Colonic mucosa (tissue), 4 donors: ENCODE measurements at regions of chr16 and their contacts with region 1.

Region 1: GRCh38 chr16:72467157-72467759 is 295.3 kb upstream of the PMFBP1 start:
- DNase-seq: no peak
- H3K4me3 ChIP-seq: no peak overlapping the region
- H3K27ac ChIP-seq: no peak overlapping the region
- H3K4me1 ChIP-seq: no peaks in the 10 kb centered on the region
- H3K27me3 ChIP-seq: no peaks in the 10 kb centered on the region
- CTCF ChIP-seq: peak; percentile 26

Region 2: DNA sequence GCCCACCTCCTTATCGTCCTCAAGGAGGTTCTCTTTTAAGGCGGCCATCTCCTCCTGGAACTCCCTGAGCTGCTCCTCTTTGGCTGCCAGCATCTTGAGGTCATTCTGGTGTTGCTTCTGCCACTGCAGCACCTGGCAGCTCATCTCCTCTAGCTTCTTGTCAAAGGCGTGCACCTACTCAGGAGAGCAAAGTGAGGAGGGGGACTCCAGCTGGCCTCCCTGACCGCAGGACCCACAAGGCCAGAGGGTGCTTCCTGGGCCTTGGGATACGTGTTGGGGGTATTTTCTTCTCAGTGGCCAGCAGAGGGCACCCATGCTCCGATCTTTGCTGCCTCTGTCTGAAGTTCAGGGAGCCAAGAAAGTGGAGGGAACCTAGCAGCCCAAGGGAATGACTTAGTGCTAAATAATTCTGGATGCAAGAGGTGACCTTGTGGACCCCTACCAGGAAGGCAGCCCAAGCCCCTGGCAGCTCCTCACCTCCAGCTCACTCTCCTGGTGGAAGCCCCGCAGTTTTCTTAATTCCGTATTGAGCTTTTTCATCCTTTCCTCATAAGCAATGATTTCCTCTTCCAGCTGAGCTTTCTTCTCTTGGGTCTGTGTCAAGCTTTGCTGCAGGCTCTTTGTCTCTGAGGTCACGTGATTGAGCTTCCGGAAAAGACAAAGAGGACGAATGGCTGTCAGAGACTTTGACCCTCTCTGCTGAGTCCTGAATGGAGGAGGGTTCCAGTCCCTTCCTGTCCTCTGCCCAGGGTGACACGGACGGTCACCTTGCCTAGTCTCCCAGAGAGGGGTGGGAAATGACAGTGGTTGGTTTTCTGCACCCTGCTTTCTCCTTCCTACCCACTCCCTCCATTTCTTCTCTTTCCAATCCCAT is 342.3 kb before region 1 on chr16:
- intact Hi-C with region 1: loop called (anchors 5 kb)
- DNase-seq: peak; percentile 76
- H3K4me3 ChIP-seq: no peak overlapping the region
- H3K27ac ChIP-seq: no peak overlapping the region
- H3K4me1 ChIP-seq: no peaks in the 10 kb centered on the region
- H3K27me3 ChIP-seq: no peaks in the 10 kb centered on the region
- CTCF ChIP-seq: peak; percentile 63

Region 3: GRCh38 chr16:72400257-72400882 is 66.9 kb before region 1 on chr16:
- intact Hi-C with region 1: loop called (anchors 5 kb)
- DNase-seq: peak; percentile 34
- H3K4me3 ChIP-seq: no peak overlapping the region
- H3K27ac ChIP-seq: no peak overlapping the region
- H3K4me1 ChIP-seq: no peaks in the 10 kb centered on the region
- H3K27me3 ChIP-seq: no peaks in the 10 kb centered on the region
- CTCF ChIP-seq: peak; percentile 81